ENCODE measurements at regions of chr1 and their contacts with region 1.

Region 1: DNA sequence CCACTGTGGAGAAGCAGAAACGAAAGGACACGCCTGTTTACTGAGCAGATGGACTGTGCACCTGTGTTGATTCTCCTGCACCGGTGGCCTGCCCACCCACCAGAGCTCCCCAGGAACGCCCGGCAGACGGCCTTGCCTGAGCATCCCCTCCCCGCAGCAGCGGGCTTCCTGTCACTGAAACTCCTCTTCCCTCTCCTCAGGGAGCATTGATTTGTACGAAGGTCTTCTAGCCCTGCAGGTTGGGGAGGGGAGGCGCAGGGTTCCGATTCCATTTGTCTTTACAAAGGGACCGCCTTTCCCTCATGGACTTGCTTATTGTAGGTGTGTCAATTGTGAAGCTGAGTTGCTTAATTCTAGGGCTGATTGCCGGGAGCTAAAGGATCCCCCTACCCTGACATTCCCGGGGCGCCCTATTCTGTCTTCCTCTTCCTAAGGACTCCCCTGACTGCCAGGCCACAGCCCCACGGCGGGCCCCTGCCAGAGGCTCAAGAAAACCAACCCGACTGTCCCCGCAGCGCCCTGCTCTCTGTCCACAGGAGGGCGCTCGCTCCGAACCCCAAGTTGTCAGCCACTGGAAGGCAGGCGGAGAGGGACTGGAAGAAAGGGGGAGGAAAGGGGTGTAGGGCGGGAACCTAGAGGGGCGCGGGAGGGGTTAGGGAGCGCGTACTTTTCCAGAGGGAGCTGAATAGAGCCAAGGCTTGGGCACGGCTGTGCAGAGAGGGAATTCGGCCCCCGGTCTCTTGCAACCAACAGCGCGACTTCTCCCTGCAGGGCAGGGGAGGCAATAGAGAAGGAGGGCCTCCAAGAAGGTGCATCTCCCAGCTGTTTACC is 2.8 kb downstream of the S100A6 start:
- DNase-seq: peak; percentile 90
- H3K4me3 Mint-ChIP-seq: peak overlapping the region; percentile 51
- H3K27ac Mint-ChIP-seq: peak overlapping the region; percentile 96
- H3K4me1 Mint-ChIP-seq: peaks cover 54% of the 10 kb centered on the region
- H3K27me3 Mint-ChIP-seq: no peaks in the 10 kb centered on the region

Region 2: DNA sequence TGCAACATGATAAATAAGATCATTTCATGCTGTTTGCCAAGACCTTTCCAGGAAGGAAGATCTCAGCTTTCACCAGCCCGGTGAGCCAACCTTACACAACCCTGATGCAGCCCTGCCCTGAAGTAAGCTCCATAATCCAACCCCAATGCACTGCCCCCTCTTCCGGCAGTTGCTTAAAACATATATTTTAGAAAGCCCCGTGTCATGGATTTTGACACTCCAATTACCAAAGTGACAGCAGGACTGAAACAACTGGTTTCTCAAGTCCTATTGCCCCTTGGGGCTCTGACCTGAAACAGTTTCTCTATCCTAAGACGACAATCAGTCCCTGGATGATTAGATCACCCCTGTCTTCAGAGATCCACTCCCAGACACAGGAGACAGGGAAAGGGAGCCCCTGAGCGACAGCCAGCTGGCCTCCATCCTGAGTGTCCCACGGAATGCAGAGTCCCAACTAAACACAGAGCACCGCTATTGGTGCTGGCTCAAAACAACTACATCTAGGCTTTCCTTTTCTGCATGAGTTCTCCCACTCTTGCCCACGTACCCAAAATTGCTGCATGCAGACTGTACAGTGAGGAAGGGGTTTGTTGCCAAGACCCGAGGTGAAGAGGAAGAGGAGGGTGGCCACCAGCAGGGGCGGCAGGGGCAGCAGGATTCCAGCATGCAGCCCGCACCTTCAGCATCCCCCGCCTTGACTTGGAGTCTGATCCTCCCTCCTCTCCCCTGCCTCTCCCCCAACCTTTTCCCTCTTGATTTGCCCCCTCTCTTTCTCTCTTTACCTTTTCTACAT is 167.5 kb before region 1 on chr1:
- CTCF ChIA-PET with region 1: no interaction called
- intact Hi-C with region 1: no loop called
- DNase-seq: no peak
- H3K4me3 Mint-ChIP-seq: no peak overlapping the region
- H3K27ac Mint-ChIP-seq: no peak overlapping the region
- H3K4me1 Mint-ChIP-seq: peaks cover 1% of the 10 kb centered on the region
- H3K27me3 Mint-ChIP-seq: no peaks in the 10 kb centered on the region

Region 3: DNA sequence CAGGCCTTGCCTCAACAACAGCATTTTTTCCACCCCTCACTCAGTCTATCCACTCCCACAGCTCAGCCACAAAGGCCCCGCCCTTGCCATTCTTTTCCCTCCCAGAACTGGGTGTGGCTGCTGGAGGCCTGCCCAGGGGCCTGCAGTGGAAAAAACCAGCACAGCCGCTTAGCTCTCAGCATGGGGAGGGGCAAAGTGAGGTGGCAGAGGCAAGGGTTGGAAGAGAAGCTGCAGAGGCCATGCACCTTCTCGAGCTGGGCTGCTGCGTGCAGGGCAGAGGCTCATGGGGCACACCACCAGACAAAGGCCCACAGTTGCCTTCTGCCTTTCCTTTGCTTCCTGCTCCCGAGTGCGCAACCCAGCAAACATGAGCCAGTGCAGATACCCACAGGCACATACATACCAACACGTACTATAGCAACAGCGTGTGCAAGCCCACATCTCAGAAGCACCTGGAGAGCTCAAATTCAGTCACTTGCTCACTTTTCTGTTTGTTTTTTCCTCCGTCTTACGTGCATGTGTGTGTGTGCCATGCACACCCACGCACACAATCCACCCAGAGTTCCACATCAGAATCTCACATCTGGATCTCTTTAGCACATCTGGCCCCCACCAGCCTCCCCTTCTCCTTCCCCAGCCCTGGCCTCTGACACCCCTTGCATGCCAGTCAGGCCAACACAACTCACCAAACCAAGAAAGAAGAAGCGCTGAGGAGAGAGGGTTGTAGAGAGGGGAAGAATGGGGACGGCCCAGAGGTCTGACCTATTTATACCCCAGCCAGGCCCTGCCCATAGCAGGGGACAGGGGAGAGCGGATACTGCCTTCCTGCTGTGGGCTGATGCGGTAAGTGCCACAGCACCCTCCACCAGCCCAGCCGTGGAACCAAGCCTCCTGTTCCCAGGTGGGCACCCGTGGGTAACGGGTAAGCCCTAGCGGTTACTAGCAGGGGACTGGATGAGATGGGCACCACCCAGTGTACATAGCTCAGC is 12.4 kb after region 1 on chr1 and contains the start of gene S100A4:
- CTCF ChIA-PET with region 1: interaction called, 47 read pairs
- intact Hi-C with region 1: loop called (anchors 1 kb)
- DNase-seq: peak; percentile 98
- H3K4me3 Mint-ChIP-seq: peak within 1 kb of the TSS; percentile 71
- H3K27ac Mint-ChIP-seq: peak within 1 kb of the TSS; percentile 93
- H3K4me1 Mint-ChIP-seq: peaks cover 74% of the 10 kb centered on the region
- H3K27me3 Mint-ChIP-seq: no peaks in the 10 kb centered on the region
- total RNA-seq, gene S100A4: 36.5 to 37.9 TPM

Region 4: GRCh38 chr1:153566440-153567379 is 33.7 kb after region 1 on chr1:
- CTCF ChIA-PET with region 1: interaction called, 207 read pairs
- intact Hi-C with region 1: loop called (anchors 1 kb)
- DNase-seq: peak; percentile 96
- H3K4me3 Mint-ChIP-seq: peak overlapping the region; percentile 32
- H3K27ac Mint-ChIP-seq: peak overlapping the region; percentile 86
- H3K4me1 Mint-ChIP-seq: peaks cover 44% of the 10 kb centered on the region
- H3K27me3 Mint-ChIP-seq: no peaks in the 10 kb centered on the region

Region 5: DNA sequence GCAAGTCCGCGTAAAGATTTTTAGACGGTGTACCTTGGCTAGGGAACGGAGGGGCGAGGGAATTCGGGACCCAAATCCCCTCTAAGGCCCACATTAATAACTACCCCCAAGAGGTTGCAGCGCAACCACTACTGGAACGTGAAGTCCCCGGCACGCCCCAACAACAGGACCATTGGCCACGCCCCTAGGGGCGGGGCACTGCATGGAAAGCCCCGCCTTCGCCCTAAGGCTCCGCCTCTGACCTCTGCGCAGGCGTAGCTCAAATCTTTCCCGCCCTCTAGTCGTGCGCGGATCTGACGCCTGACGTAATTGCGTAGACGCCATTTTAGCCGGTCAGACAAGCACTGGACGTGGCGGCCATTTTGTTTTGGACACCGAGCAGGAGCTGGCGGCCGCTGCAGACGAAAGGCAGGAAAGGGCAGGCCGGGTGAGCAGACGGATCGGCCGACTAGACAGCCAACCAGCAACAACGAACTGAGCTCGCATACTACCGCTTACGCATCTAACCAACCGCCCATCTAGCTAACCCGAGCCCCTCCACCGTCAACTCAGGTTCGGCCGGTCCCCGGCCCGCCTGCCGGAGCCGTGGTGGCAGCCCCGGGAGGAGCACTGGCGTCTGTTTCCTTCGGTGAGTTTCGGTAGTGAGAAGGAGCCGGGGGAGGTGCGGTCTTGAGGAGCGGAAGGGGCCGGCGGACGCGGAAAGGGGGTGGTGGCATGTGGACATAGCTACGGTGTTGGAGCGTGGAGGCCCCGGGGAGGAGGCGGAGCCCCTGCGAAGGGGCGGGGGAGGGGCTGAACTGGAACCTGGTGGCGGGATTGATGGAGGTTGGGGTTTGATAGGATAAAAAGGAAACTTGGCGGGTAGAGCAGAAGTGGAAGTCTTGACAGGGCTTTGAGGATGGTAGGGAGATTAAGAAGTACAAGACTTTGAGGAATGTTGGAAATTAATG is 101.0 kb after region 1 on chr1 and contains the start of gene CHTOP:
- CTCF ChIA-PET with region 1: interaction called, 12 read pairs
- intact Hi-C with region 1: loop called (anchors 1 kb)
- DNase-seq: peak; percentile 98
- H3K4me3 Mint-ChIP-seq: peak within 1 kb of the TSS; percentile 90
- H3K27ac Mint-ChIP-seq: peak within 1 kb of the TSS; percentile 100
- H3K4me1 Mint-ChIP-seq: peaks cover 45% of the 10 kb centered on the region
- H3K27me3 Mint-ChIP-seq: no peaks in the 10 kb centered on the region
- total RNA-seq, gene CHTOP: 88.2 to 91.3 TPM

Region 6: GRCh38 chr1:153677718-153678505 is 144.9 kb after region 1 on chr1:
- CTCF ChIA-PET with region 1: no interaction called
- intact Hi-C with region 1: no loop called
- DNase-seq: peak; percentile 63
- H3K4me3 Mint-ChIP-seq: peak overlapping the region; percentile 71
- H3K27ac Mint-ChIP-seq: no peak overlapping the region
- H3K4me1 Mint-ChIP-seq: peaks cover 20% of the 10 kb centered on the region
- H3K27me3 Mint-ChIP-seq: peaks cover 31% of the 10 kb centered on the region

Region 7: DNA sequence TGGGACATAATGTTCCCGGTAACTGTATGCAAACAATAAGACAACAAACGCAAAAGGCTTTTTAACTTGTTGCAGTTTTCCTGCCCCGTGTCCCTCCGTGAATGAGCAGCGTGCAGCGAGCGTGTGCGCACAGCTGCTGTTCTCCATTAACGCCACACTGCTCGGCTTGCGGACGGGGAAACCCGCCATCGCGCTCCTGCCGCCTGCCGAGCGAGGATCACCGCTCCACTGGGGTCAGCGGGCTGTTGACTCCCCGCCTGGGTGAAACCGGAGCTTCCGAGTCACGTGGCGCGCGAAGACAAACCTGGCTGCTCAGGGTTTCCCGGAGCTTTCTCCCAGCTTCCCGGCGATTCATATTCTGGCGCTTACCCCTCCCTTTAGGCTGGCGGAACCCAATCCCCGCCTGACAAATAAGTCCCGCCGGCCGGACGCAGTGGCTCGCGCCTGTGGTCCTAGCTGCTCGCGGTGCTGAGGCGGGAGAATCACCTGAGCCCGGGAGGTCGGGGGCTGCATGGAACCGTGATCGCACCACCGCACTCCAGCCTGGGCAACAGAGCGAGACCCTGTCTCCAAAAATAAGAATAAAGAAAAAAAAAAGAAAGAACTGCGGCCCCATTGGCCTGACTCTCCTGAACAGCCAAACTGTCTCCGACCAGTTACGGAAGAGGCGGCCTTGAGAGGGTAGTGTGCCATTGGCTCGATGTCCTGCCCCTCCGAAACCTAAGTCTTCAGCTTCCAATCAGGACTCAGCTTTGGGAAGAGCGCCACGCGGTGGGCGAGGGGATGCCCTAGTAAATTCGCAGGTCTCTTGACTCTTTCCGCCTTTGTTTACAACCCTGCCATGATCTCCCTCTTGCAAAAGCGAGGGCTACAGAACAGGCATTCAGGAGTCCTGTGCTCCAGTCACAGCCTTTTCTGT is 434.4 kb after region 1 on chr1 and contains the start of gene CREB3L4:
- CTCF ChIA-PET with region 1: no interaction called
- intact Hi-C with region 1: loop called (anchors 10 kb)
- DNase-seq: peak; percentile 90
- H3K4me3 Mint-ChIP-seq: peak within 1 kb of the TSS; percentile 85
- H3K27ac Mint-ChIP-seq: peak within 1 kb of the TSS; percentile 94
- H3K4me1 Mint-ChIP-seq: peaks cover 42% of the 10 kb centered on the region
- H3K27me3 Mint-ChIP-seq: no peaks in the 10 kb centered on the region
- total RNA-seq, gene CREB3L4: 5.6 to 7.4 TPM

Region 8: DNA sequence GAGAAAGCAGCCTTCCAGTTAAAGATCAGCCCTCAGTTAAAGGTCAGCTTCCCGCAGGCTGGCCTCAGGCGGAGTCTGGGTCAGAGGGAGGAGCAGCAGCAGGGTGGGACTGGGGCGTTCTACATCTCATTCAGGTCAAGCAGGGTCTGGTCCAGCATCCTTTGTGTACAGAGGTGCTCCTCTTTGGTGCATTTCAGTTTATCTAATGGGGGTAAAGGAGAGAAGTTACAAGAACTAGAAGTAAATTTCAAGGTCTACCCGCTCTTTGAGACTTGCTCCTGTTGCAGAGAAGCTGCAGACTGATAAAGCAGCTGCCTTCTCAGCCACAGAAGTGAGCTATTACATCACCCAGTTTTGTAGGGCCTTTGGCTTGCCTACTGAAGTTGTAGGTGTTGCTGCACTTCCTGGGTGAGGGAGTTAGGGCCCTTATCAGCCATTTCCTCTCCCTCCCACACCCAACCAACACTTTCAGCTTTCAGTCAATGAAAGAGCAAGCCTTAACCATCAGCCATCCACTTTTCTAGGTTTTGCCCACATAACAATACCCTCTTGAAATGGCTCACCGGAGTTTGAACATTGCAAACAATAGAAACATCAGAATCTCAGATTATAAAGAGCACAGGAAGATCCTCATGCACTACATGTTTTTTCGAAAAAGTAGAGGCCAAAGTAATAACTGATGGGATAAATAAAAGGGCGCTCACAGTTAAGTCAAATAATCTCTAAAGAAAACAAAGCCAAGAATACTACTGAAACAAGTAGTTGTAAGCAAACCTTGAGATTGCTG is 624.7 kb after region 1 on chr1:
- CTCF ChIA-PET with region 1: no interaction called
- intact Hi-C with region 1: loop called (anchors 10 kb)
- DNase-seq: peak; percentile 87
- H3K4me3 Mint-ChIP-seq: peak overlapping the region; percentile 48
- H3K27ac Mint-ChIP-seq: peak overlapping the region; percentile 96
- H3K4me1 Mint-ChIP-seq: peaks cover 70% of the 10 kb centered on the region
- H3K27me3 Mint-ChIP-seq: no peaks in the 10 kb centered on the region

Measured in activated naive CD4-positive, alpha-beta T cell treated with anti-CD3 and anti-CD28 coated beads for 36 hours (primary cell).